Activated CD8-positive, alpha-beta T cell treated with anti-CD3 and anti-CD28 coated beads for 36 hours (primary cell): ENCODE measurements at regions of chr4 and their contacts with region 1.

Region 1: GRCh38 chr4:119300101-119300978 is 21.6 kb downstream of the FABP2 start:
- DNase-seq: peak; percentile 96
- ATAC-seq: peak; percentile 99
- H3K4me3 Mint-ChIP-seq: peak overlapping the region; percentile 92
- H3K27ac Mint-ChIP-seq: peak overlapping the region; percentile 98
- H3K4me1 Mint-ChIP-seq: peaks cover 25% of the 10 kb centered on the region
- H3K27me3 Mint-ChIP-seq: peaks cover 3% of the 10 kb centered on the region
- CTCF ChIP-seq: no peak

Region 2: DNA sequence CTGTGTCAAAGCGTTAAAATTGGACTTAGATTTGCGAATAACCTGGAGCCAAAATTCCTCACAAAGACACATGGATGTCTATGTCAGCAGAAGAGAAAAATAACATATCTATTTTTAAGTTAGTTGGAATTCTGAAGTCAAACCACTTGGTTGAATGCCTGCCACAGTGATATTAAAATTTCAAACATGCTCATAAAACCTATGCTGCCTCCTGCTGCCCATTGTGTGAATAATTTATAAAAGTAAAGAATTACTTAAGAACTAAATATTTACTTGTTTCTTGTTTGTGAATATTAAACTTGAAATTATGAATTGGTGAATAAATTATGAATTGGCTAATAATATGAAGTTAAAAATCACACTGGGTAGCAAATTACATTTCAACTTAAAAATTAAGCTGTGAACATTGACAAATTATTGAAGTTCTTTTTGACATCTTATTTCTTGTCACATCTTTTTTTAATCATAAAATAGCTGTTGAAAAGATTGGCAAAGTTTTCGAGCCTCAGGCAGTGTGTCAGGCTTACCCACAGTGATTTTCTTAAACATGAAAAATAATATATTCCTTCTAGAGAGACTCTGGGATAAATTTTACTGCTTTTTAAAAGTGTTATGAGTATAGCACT is 13.8 kb before region 1 on chr4:
- CTCF ChIA-PET with region 1: interaction called, 15 read pairs
- POLR2A ChIA-PET with region 1: interaction called, 4 read pairs
- intact Hi-C with region 1: no loop called
- DNase-seq: peak; percentile 43
- ATAC-seq: peak; percentile 39
- H3K4me3 Mint-ChIP-seq: no peak overlapping the region
- H3K27ac Mint-ChIP-seq: no peak overlapping the region
- H3K4me1 Mint-ChIP-seq: peaks cover 19% of the 10 kb centered on the region
- H3K27me3 Mint-ChIP-seq: no peaks in the 10 kb centered on the region
- CTCF ChIP-seq: peak; percentile 74

Region 3: DNA sequence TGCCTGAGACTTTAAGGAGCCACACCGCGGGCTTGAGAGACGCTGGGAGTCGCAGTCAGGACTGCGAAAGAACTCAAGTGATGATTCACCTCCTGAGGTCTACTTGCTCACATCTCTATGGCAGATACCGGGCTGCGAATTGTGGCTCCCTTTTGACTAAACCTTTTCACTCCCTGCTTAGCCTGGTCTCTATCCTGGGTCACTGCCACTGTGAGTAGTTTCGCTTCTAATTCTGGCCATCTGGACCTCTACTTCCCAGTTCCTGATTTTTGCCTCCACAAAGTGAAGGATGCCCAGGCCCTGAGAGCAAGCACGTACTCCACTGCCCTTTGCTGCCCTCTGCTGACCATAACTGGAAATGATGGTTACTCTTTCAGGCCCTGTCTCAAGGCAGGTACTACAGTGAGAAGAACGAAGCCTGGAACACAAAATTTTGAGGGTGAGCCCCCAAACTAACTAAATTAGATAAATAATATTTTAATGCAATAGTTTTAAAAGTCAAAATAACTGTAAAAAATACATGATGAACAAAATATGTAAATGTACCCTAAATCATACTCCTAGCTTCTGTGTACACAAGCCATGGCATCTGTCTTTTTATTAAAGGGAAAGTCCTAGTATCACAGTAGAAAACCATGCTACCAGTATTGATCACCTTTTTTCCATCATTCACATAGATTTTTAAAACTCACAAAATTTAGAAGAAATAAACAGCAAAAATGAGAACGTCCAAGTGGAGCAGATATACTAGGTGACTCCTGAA is 749.6 kb after region 1 on chr4:
- CTCF ChIA-PET with region 1: no interaction called
- POLR2A ChIA-PET with region 1: no interaction called
- intact Hi-C with region 1: loop called (anchors 10 kb)
- DNase-seq: peak; percentile 81
- ATAC-seq: peak; percentile 93
- H3K4me3 Mint-ChIP-seq: no peak overlapping the region
- H3K27ac Mint-ChIP-seq: peak overlapping the region; percentile 70
- H3K4me1 Mint-ChIP-seq: peaks cover 5% of the 10 kb centered on the region
- H3K27me3 Mint-ChIP-seq: no peaks in the 10 kb centered on the region
- CTCF ChIP-seq: peak; percentile 61